ENCODE measurements at regions of chr2 and their contacts with region 1.

Region 1: GRCh38 chr2:150141226-150142001 is 346.1 kb downstream of the RND3 start:
- DNase-seq: no peak
- ATAC-seq: peak; percentile 69
- H3K4me3 ChIP-seq: no peak overlapping the region
- H3K27ac ChIP-seq: peak overlapping the region; percentile 59; the same call in 1 of the 2 replicates
- H3K4me1 ChIP-seq: peaks cover 2% of the 10 kb centered on the region
- H3K27me3 ChIP-seq: no peaks in the 10 kb centered on the region
- CTCF ChIP-seq: no peak

Region 2: GRCh38 chr2:150166313-150167051 is 25.1 kb after region 1 on chr2:
- CTCF ChIA-PET with region 1: no interaction called
- POLR2A ChIA-PET with region 1: interaction called, 10 read pairs
- in situ Hi-C with region 1: no loop called
- intact Hi-C with region 1: no loop called
- DNase-seq: no peak
- ATAC-seq: peak; percentile 91
- H3K4me3 ChIP-seq: peak overlapping the region in 1 of 2 experiments; percentile 12; a peak in 1 of 4 replicates
- H3K27ac ChIP-seq: peak overlapping the region; percentile 77
- H3K4me1 ChIP-seq: peaks cover 19% of the 10 kb centered on the region
- H3K27me3 ChIP-seq: no peaks in the 10 kb centered on the region
- CTCF ChIP-seq: no peak

Measured in Panc1 (cell line).